ENCODE measurements at regions of chr4 and their contacts with region 1.

Region 1: DNA sequence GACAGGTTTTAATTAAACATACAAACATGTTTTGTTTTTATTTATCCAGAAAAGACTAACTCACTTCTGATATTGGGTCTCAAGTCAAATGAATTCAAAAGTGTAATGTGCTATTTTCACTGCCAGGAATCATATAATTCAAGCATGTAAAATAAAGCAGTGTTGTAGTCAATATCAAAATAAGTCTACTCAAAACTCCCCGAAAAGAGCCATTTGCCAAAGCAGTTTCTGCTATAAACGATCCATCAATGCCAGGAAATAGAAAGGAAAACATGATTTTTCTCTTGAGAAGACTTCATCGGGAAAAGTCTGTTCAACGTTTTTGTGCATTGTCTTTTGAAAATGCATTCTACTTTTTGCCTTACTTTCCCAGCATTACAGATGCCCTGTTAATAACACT is 633.3 kb downstream of the FAT4 start:
- DNase-seq: no peak
- ATAC-seq: no peak
- H3K4me3 ChIP-seq: no peak overlapping the region
- H3K27ac ChIP-seq: no peak overlapping the region
- H3K4me1 ChIP-seq: no peaks in the 10 kb centered on the region
- H3K27me3 ChIP-seq: no peaks in the 10 kb centered on the region
- CTCF ChIP-seq: no peak

Region 2: DNA sequence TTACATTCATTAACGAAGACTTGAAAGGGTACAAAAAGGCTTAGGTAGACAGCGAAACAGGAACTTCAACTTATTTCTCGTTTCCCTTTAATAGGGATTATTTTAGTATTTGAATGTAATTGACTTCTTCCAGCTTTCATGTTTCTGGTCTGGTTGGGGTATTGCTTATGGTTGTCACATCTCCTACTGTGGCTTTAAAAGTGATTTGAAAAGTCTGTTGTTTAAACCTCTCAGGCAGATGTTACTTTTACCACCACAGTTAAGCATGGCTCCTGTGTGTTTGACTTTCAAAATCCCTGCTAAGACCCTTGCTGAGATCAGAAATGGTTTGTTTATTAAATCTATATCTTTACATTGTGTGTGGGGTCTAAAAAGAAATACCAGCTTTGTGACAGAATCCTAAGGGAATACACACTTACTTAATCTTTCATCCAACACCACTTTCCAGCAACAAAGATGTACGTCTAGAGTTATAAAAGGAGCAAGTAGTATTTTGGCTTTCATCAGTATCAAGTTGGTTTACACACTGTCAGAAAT is 27.9 kb after region 1 on chr4:
- intact Hi-C with region 1: loop called in 1 of 10 experiments (anchors 2 kb)
- DNase-seq: no peak
- ATAC-seq: no peak
- H3K4me3 ChIP-seq: no peak overlapping the region
- H3K27ac ChIP-seq: no peak overlapping the region
- H3K4me1 ChIP-seq: no peaks in the 10 kb centered on the region
- H3K27me3 ChIP-seq: no peaks in the 10 kb centered on the region
- CTCF ChIP-seq: no peak

Region 3: DNA sequence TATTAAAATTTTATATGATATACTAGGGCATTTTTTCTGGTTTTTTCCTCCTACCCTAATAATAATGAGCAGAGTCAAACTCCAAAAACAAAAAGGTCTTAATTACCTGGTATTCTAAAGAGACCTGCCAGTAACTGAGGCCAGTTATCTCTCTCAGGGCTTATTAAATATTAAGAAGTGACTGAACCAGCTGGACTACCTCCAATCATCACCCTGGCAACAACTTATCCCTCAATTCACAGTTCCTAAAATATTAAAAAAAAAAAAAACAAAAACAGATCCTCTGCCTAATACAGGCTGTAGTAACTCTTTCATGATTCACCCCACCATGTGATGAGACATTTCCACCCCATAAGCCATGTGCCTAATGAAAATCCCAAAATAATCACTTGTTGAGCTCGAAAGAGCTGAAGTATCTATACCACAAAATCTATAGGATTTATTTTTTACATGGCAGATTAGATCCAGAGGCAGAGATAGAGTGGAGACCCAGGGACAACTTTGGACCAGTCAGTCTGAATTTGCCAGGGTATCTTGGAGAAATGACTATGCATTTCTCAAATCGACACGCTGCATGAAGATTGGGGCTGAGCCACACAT is 64.8 kb after region 1 on chr4:
- intact Hi-C with region 1: no loop called
- DNase-seq: no peak
- ATAC-seq: no peak
- H3K4me3 ChIP-seq: no peak overlapping the region
- H3K27ac ChIP-seq: no peak overlapping the region
- H3K4me1 ChIP-seq: no peaks in the 10 kb centered on the region
- H3K27me3 ChIP-seq: no peaks in the 10 kb centered on the region
- CTCF ChIP-seq: no peak

Region 4: GRCh38 chr4:126071346-126072333 is 123.6 kb after region 1 on chr4:
- intact Hi-C with region 1: no loop called
- DNase-seq: no peak
- ATAC-seq: peak; percentile 49 to 85 (median 68)
- H3K4me3 ChIP-seq: no peak overlapping the region
- H3K27ac ChIP-seq: no peak overlapping the region
- H3K4me1 ChIP-seq: peaks cover 0 to 14% (median 6%) of the 10 kb centered on the region in 9 donors
- H3K27me3 ChIP-seq: no peaks in the 10 kb centered on the region
- CTCF ChIP-seq: no peak

Region 5: GRCh38 chr4:127810551-127810950 is 1862.5 kb after region 1 on chr4:
- intact Hi-C with region 1: loop called in 1 of 10 experiments (anchors 5 kb)
- DNase-seq: no peak
- ATAC-seq: no peak
- H3K4me3 ChIP-seq: no peak overlapping the region
- H3K27ac ChIP-seq: no peak overlapping the region
- H3K4me1 ChIP-seq: no peaks in the 10 kb centered on the region
- H3K27me3 ChIP-seq: no peaks in the 10 kb centered on the region
- CTCF ChIP-seq: no peak

Measured in heart right ventricle (tissue), 16 donors.